PC-3 (cell line): ENCODE measurements at regions of chr2 and their contacts with region 1.

Region 1: DNA sequence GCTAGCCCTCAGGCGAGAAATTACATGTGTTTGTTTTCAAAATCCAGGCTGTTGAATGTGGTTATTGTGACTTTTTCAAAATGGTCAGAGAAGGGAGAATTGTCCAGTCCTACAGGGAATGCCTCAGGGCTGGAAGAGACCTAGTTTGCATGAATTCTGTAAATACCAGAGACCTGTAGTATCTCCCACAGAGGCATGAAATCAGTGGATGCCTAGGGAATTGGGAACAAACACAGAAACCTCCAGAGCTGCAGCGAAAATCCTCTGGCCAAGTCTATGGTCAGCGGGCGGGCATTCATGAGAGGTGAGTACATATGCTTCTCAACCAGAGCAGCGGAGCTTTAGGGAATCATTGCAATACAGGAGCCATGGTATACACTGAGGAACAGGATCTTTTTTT is 1596.5 kb upstream of the NXPH2 start:
- DNase-seq: no peak
- ATAC-seq: no peak; the same call in 1 of the 2 replicates
- H3K4me3 ChIP-seq: no peak overlapping the region
- H3K27ac ChIP-seq: no peak overlapping the region
- H3K4me1 ChIP-seq: peaks cover 16% of the 10 kb centered on the region
- H3K27me3 ChIP-seq: no peaks in the 10 kb centered on the region
- CTCF ChIP-seq: no peak

Region 2: DNA sequence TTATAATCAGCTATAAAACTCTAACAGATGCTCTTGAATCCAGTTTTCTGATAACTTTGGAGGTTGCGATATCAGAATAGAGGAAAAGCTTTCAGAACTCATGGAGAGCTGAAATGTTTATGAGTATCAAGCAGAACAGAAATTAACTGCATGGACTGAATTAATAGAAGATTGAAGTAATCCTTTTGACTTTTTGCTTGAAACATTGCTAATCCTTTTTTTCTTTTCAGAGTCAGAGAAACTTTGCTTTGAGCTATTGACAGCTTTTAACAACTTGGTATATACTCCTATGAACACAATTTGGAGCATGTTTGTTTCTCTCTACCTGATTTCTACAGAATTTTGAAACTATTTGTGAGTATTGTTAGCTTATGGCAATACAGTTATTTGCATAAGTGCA is 499.3 kb after region 1 on chr2:
- CTCF ChIA-PET with region 1: no interaction called
- POLR2A ChIA-PET with region 1: interaction called, 11 read pairs
- intact Hi-C with region 1: no loop called
- DNase-seq: no peak
- ATAC-seq: no peak
- H3K4me3 ChIP-seq: no peak overlapping the region
- H3K27ac ChIP-seq: no peak overlapping the region
- H3K4me1 ChIP-seq: no peaks in the 10 kb centered on the region
- H3K27me3 ChIP-seq: no peaks in the 10 kb centered on the region
- CTCF ChIP-seq: no peak